K562 (cell line): ENCODE measurements at regions of chr2 and their contacts with region 1.

Region 1: DNA sequence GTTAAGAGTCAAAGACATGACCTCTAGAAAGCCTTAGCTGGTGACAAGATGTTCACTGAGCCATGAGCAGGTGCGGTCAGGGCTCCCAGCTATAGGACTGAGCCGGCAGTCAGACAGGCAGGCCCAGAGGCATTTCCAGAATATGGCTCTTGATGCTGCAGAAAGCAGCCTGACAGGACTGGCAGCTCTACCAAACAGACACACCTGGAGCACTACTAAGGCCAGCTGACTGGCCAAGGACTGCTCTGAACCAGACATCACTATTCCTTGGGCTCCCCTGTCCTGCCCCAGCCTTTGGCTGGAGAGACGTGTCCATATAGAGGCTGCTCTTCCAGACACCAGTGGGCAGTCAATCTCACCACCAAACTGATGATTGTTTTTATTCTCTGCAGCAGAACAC is 98.8 kb downstream of the RIF1 start:
- DNase-seq: no peak
- ATAC-seq: peak; percentile 56
- H3K4me3 ChIP-seq: no peak overlapping the region
- H3K27ac ChIP-seq: no peak overlapping the region
- H3K4me1 ChIP-seq: no peaks in the 10 kb centered on the region; a peak in 1 of 5 replicates
- H3K27me3 ChIP-seq: no peaks in the 10 kb centered on the region
- CTCF ChIP-seq: no peak
- EP300 ChIP-seq: no peak
- POLR2A ChIP-seq: no peak
- RAD21 ChIP-seq: no peak

Region 2: DNA sequence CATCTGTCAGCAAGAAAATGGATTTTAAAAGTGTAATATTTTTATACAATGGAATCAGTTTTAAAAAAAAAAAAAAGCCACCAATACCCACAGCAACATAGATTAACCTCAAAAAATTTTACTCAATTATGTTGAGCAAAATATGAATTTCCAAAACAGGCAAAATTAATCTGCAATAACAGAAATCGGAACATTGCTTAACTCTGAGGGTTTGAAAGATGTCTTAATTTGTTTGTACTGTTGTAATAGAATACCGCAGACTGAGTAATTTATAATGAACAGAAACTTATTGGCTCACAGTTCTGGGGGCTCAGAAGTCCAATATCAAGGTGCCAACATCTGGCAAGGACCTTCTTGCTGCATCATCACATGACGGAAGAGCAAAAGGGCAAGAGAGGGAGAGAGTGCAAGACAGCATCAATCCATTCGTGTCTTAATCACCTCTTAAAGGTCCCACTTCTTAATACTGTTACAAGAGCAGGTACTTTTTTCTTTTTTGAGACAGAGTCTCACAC is 182.9 kb before region 1 on chr2:
- CTCF ChIA-PET with region 1: no interaction called
- POLR2A ChIA-PET with region 1: no interaction called
- in situ Hi-C with region 1: no loop called
- intact Hi-C with region 1: no loop called
- DNase-seq: no peak
- ATAC-seq: no peak
- H3K4me3 ChIP-seq: no peak overlapping the region
- H3K27ac ChIP-seq: no peak overlapping the region
- H3K4me1 ChIP-seq: no peaks in the 10 kb centered on the region
- H3K27me3 ChIP-seq: peaks cover 0 to 2% of the 10 kb centered on the region in 2 experiments; a peak in 1 of 5 replicates
- CTCF ChIP-seq: no peak
- EP300 ChIP-seq: no peak
- POLR2A ChIP-seq: no peak
- RAD21 ChIP-seq: no peak

Region 3: GRCh38 chr2:152012697-152013096 is 504.2 kb after region 1 on chr2:
- CTCF ChIA-PET with region 1: no interaction called
- POLR2A ChIA-PET with region 1: no interaction called
- in situ Hi-C with region 1: loop called (anchors 5 kb)
- intact Hi-C with region 1: no loop called
- DNase-seq: no peak
- ATAC-seq: no peak
- H3K4me3 ChIP-seq: no peak overlapping the region
- H3K27ac ChIP-seq: no peak overlapping the region
- H3K4me1 ChIP-seq: no peaks in the 10 kb centered on the region
- H3K27me3 ChIP-seq: peaks cover 21 to 33% of the 10 kb centered on the region in 2 experiments
- CTCF ChIP-seq: no peak
- EP300 ChIP-seq: no peak
- POLR2A ChIP-seq: no peak
- RAD21 ChIP-seq: no peak